Activated B cell treated with CpG ODN at 0.5 μM for 24 hours (primary cell): ENCODE measurements at regions of chr19 and their contacts with region 1.

Region 1: GRCh38 chr19:49497047-49497788 is 984 bp downstream of the RPS11 start:
- DNase-seq: peak; percentile 55
- ATAC-seq: peak; percentile 7
- H3K4me3 Mint-ChIP-seq: peak overlapping the region; percentile 93
- H3K27ac Mint-ChIP-seq: peak overlapping the region; percentile 97
- H3K4me1 Mint-ChIP-seq: peaks cover 68% of the 10 kb centered on the region
- H3K27me3 Mint-ChIP-seq: no peaks in the 10 kb centered on the region
- CTCF ChIP-seq: no peak

Region 2: DNA sequence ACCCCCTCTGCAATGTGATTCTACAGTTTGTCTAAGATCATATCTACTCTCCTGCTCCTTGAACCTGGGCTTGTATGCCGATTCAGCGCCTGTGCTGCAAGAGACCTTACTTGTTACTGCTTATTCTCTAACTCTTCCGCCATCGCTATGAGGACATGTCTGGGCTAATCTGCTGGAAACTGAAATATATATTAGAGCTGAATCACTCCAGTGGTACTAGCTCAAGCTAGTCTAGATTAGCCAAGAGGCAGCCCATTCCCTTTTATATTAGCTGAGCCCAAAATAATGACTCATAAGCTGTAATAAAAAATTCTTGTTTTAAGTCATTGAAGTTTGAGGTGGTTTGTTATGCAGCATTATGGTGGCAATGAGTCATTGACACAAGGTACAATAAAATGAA is 225.0 kb before region 1 on chr19:
- CTCF ChIA-PET with region 1: no interaction called
- POLR2A ChIA-PET with region 1: interaction called, 13 read pairs
- intact Hi-C with region 1: no loop called
- DNase-seq: no peak
- ATAC-seq: no peak
- H3K4me3 Mint-ChIP-seq: no peak overlapping the region
- H3K27ac Mint-ChIP-seq: no peak overlapping the region
- H3K4me1 Mint-ChIP-seq: no peaks in the 10 kb centered on the region
- H3K27me3 Mint-ChIP-seq: peaks cover 11% of the 10 kb centered on the region
- CTCF ChIP-seq: no peak

Region 3: GRCh38 chr19:49412869-49413268 is 84.3 kb before region 1 on chr19:
- CTCF ChIA-PET with region 1: no interaction called
- POLR2A ChIA-PET with region 1: no interaction called
- intact Hi-C with region 1: no loop called
- DNase-seq: no peak
- ATAC-seq: no peak
- H3K4me3 Mint-ChIP-seq: no peak overlapping the region
- H3K27ac Mint-ChIP-seq: no peak overlapping the region
- H3K4me1 Mint-ChIP-seq: peaks cover 56% of the 10 kb centered on the region
- H3K27me3 Mint-ChIP-seq: peaks cover 6% of the 10 kb centered on the region
- CTCF ChIP-seq: no peak

Region 4: DNA sequence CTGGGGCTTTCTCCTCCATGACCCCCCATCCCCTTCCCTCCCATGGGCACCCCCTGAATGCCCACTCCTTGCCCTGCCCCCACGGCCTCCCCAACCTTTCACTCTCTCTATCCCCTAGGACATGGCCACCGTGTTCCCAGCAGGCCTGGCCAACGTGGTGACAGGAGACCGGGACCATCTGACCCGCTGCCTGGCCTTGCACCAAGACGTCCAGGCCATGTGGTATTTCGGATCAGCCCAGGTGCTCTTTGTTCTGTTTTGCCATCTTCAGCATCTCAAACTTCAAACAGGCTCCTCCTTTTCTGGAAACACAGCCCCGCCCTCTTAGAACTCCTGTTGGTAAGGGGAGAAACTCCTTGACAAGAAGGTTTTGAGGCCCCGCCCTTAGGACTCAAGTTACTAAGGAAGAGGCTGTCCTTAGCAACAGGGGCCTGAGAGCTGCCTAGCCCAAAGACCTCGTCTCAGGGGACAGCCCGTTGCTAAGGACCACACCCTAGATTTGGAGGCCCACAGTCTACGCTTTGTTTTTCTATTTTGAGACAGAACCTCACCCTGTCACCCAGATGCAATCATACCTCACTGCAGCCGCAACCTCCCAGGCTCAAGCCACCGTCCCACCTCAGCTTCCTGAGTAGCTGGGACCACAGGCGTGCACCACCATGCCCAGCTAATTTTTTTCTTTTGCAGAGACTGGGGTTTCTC is 28.3 kb before region 1 on chr19:
- CTCF ChIA-PET with region 1: interaction called, 3 read pairs
- POLR2A ChIA-PET with region 1: interaction called, 9 read pairs
- intact Hi-C with region 1: loop called (anchors 1 kb)
- DNase-seq: peak; percentile 72
- ATAC-seq: peak; percentile 76
- H3K4me3 Mint-ChIP-seq: peak overlapping the region; percentile 61
- H3K27ac Mint-ChIP-seq: peak overlapping the region; percentile 97
- H3K4me1 Mint-ChIP-seq: peaks cover 46% of the 10 kb centered on the region
- H3K27me3 Mint-ChIP-seq: no peaks in the 10 kb centered on the region
- CTCF ChIP-seq: no peak

Region 5: GRCh38 chr19:49533551-49534488 is 36.6 kb after region 1 on chr19:
- CTCF ChIA-PET with region 1: interaction called, 3 read pairs
- POLR2A ChIA-PET with region 1: interaction called, 7 read pairs
- intact Hi-C with region 1: loop called (anchors 5 kb)
- DNase-seq: peak; percentile 93
- ATAC-seq: peak; percentile 87
- H3K4me3 Mint-ChIP-seq: peak overlapping the region; percentile 82
- H3K27ac Mint-ChIP-seq: no peak overlapping the region
- H3K4me1 Mint-ChIP-seq: peaks cover 43% of the 10 kb centered on the region
- H3K27me3 Mint-ChIP-seq: no peaks in the 10 kb centered on the region
- CTCF ChIP-seq: no peak

Region 6: GRCh38 chr19:49640113-49640898 is 143.1 kb after region 1 on chr19 and contains the start of gene RRAS:
- CTCF ChIA-PET with region 1: no interaction called
- POLR2A ChIA-PET with region 1: interaction called, 11 read pairs
- intact Hi-C with region 1: loop called (anchors 1 kb)
- DNase-seq: peak; percentile 97
- ATAC-seq: peak; percentile 69
- H3K4me3 Mint-ChIP-seq: peak within 1 kb of the TSS; percentile 93
- H3K27ac Mint-ChIP-seq: peak within 1 kb of the TSS; percentile 96
- H3K4me1 Mint-ChIP-seq: peaks cover 59% of the 10 kb centered on the region
- H3K27me3 Mint-ChIP-seq: no peaks in the 10 kb centered on the region
- CTCF ChIP-seq: no peak
- total RNA-seq, gene RRAS: 4.8 and 5.1 TPM in 2 replicates